Activated CD8-positive, alpha-beta T cell treated with anti-CD3 and anti-CD28 coated beads, Interleukin-2, amount 10 ng/mL, durations not matched to agents 7 days and 5 days (primary cell): ENCODE measurements at regions of chr2 and their contacts with region 1.

Region 1: GRCh38 chr2:173402405-173402974 is 47.8 kb downstream of the CDCA7 start:
- DNase-seq: peak; percentile 83
- ATAC-seq: peak; percentile 92
- H3K4me3 Mint-ChIP-seq: no peak overlapping the region
- H3K27ac Mint-ChIP-seq: no peak overlapping the region
- H3K4me1 Mint-ChIP-seq: peaks cover 7% of the 10 kb centered on the region
- H3K27me3 Mint-ChIP-seq: peaks cover 48% of the 10 kb centered on the region

Region 2: GRCh38 chr2:173448938-173449471 is 46.5 kb after region 1 on chr2:
- CTCF ChIA-PET with region 1: interaction called, 20 read pairs
- POLR2A ChIA-PET with region 1: no interaction called
- DNase-seq: peak; percentile 75
- ATAC-seq: peak; percentile 72
- H3K4me3 Mint-ChIP-seq: no peak overlapping the region
- H3K27ac Mint-ChIP-seq: peak overlapping the region; percentile 57
- H3K4me1 Mint-ChIP-seq: peaks cover 14% of the 10 kb centered on the region
- H3K27me3 Mint-ChIP-seq: peaks cover 14% of the 10 kb centered on the region

Region 3: GRCh38 chr2:173568054-173568453 is 165.6 kb after region 1 on chr2:
- CTCF ChIA-PET with region 1: interaction called, 10 read pairs
- POLR2A ChIA-PET with region 1: no interaction called
- DNase-seq: peak; percentile 23
- ATAC-seq: no peak
- H3K4me3 Mint-ChIP-seq: no peak overlapping the region
- H3K27ac Mint-ChIP-seq: no peak overlapping the region
- H3K4me1 Mint-ChIP-seq: peaks cover 2% of the 10 kb centered on the region
- H3K27me3 Mint-ChIP-seq: peaks cover 23% of the 10 kb centered on the region